RWPE1 (cell line): ENCODE measurements at regions of chr3 and their contacts with region 1.

Region 1: GRCh38 chr3:171772427-171773056 is 37.7 kb downstream of the PLD1 start:
- DNase-seq: peak; percentile 67
- H3K27ac ChIP-seq: no peak overlapping the region
- CTCF ChIP-seq: peak; percentile 76

Region 2: DNA sequence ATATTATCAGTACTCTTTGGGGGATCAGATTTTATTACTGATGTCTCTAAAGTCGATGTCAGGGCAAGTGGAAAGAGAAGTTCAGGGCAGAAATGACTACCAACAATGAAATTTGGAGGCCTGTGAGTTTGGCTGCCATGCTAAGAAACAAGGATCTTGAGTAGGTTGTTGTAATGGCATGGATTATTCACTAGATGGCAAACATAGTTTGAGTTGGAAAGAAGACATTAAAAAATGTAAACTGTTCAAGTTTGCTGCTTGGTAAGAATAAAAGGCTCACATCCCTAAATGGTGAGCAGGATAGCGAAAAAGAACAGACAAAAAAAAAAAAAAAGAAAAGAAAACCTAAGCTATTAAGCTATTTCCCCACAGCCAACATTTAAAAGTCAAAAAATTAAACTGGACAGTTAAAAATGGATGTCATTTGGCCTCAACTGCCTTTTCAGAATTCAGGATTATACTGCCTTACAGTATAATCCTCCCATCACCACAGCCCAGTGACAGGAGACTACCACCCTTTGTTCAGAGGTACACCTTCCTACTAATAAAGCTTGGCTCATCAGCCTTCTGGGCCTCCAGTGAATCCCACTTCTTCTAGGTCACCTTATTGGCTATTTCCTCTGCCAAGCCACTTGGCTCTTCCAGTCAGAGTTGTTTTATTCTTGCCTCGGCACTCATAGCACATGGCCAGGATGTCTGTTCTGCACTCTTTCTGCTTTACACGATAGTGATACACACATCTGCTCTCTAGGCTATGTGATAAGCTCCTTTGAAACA is 126.0 kb before region 1 on chr3:
- CTCF ChIA-PET with region 1: interaction called, 20 read pairs
- POLR2A ChIA-PET with region 1: no interaction called
- DNase-seq: peak; percentile 52
- H3K27ac ChIP-seq: no peak overlapping the region
- CTCF ChIP-seq: peak; percentile 83

Region 3: GRCh38 chr3:171829841-171830517 is 57.4 kb after region 1 on chr3:
- CTCF ChIA-PET with region 1: interaction called, 15 read pairs
- POLR2A ChIA-PET with region 1: interaction called, 4 read pairs
- DNase-seq: peak; percentile 37
- H3K27ac ChIP-seq: peak overlapping the region; percentile 35; the same call in 1 of the 2 replicates
- CTCF ChIP-seq: peak; percentile 64

Region 4: GRCh38 chr3:171916888-171917287 is 144.3 kb after region 1 on chr3:
- CTCF ChIA-PET with region 1: no interaction called
- POLR2A ChIA-PET with region 1: no interaction called
- DNase-seq: no peak
- H3K27ac ChIP-seq: no peak overlapping the region
- CTCF ChIP-seq: no peak